Naive thymus-derived CD8-positive, alpha-beta T cell (primary cell): ENCODE measurements at regions of chr15 and their contacts with region 1.

Region 1: DNA sequence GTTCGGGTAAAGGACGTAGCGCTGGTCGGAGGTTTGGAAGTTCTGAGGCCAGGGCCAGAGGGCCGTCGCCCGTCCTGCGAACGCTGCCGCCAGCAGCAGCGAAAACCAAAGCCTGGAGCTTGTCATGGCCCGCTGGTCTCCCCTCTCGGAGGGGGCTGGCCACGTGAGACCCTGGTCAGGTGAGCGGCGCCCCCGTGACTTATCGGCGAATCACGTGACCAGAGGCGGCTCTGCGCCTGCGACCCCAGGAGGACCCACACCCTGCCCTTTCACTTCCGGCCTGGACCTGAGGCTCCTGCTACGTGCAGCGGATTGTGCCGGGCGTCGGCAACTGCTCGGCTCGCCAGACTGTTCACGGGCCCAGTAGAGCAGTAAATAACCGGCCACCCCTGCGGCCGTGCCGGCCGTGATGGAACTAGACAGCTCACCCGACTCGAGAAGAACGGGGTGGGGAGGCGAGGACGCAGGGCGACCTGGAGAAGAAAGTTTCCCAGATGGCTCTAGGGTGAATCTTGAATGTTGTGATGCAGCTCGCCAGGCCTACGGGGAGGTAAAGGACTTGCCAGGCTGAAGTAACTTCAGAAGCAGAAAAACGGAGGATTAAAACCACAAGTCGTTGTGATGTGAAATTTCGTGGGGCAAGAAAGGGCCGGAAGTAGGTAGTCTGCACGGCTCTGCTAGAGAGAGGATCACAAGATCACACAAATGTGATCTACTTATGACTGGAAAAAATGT is at the start of gene HEXA:
- DNase-seq: peak; percentile 95 to 100 (median 98)
- ATAC-seq: peak; percentile 83 to 87
- H3K4me3 Mint-ChIP-seq: peak within 1 kb of the TSS; percentile 89 to 99 (median 95)
- H3K27ac Mint-ChIP-seq: peak within 1 kb of the TSS; percentile 95 to 100 (median 98)
- H3K4me1 Mint-ChIP-seq: peaks cover 35 to 69% (median 61%) of the 10 kb centered on the region in 4 donors
- H3K27me3 Mint-ChIP-seq: peaks cover 0 to 9% (median 0%) of the 10 kb centered on the region in 5 donors
- polyA plus RNA-seq, gene HEXA: 80.0 to 113 (median 94.7) TPM

Region 2: DNA sequence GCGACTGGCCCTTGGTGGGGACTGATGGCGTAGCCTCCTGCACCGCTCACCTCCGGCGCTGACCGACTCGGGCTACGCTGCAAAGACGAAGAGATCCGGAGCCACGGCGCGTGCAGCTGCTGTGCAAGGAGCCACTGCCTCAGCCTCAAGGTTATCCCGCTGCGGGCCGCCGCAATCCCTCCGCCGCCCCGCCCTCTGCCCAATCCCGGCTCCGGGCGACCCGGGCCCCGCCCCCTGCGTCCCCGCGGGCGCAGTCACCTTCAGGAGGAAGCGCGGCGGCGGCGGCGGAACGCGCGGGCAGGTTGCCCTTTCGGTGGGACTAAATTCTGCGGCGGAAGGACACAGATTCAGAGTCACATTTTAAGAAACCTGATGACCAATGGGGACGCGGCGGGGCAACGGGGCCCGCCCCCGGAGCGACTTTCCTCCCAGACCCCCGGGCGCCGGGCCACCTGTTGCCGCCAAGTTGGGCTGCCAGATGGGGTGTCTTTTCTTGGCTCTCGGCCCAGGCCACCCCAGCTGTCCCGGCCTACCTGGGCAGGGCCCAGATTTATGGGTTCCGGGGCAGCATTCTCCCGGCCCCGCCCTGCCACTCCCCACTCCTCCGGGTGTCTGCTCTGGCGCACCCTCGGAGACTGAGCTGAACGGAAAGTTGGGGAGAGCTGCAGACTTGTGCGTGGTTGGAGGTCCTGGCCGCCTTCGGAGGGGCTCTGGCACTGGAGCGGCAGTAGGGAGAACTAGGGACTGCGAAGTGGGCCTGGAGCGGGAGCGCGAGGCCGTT is 144.8 kb before region 1 on chr15 and contains the start of gene PKM:
- POLR2A ChIA-PET with region 1: interaction called, 14 read pairs
- DNase-seq: peak; percentile 84 to 96 (median 88)
- ATAC-seq: peak; percentile 43 to 46
- H3K4me3 Mint-ChIP-seq: peak within 1 kb of the TSS; percentile 94 to 99 (median 98)
- H3K27ac Mint-ChIP-seq: peak within 1 kb of the TSS; percentile 86 to 99 (median 96)
- H3K4me1 Mint-ChIP-seq: peaks cover 25 to 56% (median 47%) of the 10 kb centered on the region in 4 donors
- H3K27me3 Mint-ChIP-seq: no peaks in the 10 kb centered on the region
- polyA plus RNA-seq, gene PKM: 305 to 330 (median 318) TPM

Region 3: GRCh38 chr15:72265031-72265430 is 111.0 kb before region 1 on chr15:
- POLR2A ChIA-PET with region 1: no interaction called
- DNase-seq: no peak
- ATAC-seq: no peak
- H3K4me3 Mint-ChIP-seq: no peak overlapping the region
- H3K27ac Mint-ChIP-seq: no peak overlapping the region
- H3K4me1 Mint-ChIP-seq: peaks cover 7 to 20% (median 10%) of the 10 kb centered on the region in 4 donors
- H3K27me3 Mint-ChIP-seq: no peaks in the 10 kb centered on the region

Region 4: DNA sequence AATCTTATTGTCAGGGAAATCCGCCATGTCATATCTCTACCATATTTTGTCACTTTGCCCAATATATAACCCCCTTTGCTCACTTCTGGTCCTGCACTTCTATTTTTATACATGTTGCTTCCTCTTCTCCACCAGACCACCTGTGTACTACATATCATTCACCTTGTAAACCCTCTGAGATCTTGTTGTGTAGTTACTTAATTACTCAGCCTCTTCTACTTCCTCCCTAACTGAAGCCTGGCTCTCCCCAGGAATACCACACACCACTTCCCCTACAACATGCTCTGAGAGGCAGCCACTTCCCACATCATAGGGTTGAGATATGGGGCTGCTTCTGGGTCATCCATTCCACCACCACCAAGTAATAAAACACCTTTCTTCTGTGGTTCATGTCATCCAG is 10.2 kb before region 1 on chr15:
- POLR2A ChIA-PET with region 1: interaction called, 15 read pairs
- DNase-seq: peak in 4 of 10 donors; percentile 15 to 49 (median 35)
- ATAC-seq: peak; percentile 72 to 95
- H3K4me3 Mint-ChIP-seq: peak overlapping the region in 6 of 10 donors; percentile 0 to 62 (median 34)
- H3K27ac Mint-ChIP-seq: peak overlapping the region in 8 of 10 donors; percentile 1 to 69 (median 24)
- H3K4me1 Mint-ChIP-seq: peaks cover 26 to 56% (median 41%) of the 10 kb centered on the region in 4 donors
- H3K27me3 Mint-ChIP-seq: no peaks in the 10 kb centered on the region

Region 5: DNA sequence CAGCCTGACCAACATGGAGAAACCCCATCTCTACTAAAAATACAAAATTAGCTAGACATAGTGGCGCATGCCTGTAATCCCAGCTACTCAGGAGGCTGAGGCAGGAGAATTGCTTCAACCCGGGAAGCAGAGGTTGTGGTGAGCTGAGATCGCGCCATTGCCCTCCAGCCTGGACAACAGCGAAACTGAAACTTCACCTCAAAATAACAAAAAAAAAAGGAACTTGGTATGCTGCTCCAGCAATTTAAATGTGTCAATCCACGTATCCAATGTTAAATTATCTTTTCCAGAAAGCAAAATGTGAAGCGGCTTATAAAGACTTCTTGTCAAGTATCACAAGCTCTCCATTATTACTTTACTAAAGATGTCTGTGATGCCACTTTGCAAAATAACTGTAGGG is 88.2 kb after region 1 on chr15:
- POLR2A ChIA-PET with region 1: interaction called, 24 read pairs
- DNase-seq: no peak
- ATAC-seq: no peak
- H3K4me3 Mint-ChIP-seq: no peak overlapping the region
- H3K27ac Mint-ChIP-seq: no peak overlapping the region
- H3K4me1 Mint-ChIP-seq: peaks cover 4 to 14% (median 10%) of the 10 kb centered on the region in 4 donors
- H3K27me3 Mint-ChIP-seq: no peaks in the 10 kb centered on the region

Region 6: GRCh38 chr15:72473614-72474465 is 97.8 kb after region 1 on chr15 and contains the start of gene ARIH1:
- POLR2A ChIA-PET with region 1: interaction called, 55 read pairs
- DNase-seq: peak; percentile 94 to 99 (median 96)
- ATAC-seq: peak; percentile 69 to 77
- H3K4me3 Mint-ChIP-seq: peak within 1 kb of the TSS; percentile 70 to 98 (median 96)
- H3K27ac Mint-ChIP-seq: peak within 1 kb of the TSS; percentile 93 to 100 (median 100)
- H3K4me1 Mint-ChIP-seq: peaks cover 26 to 53% (median 51%) of the 10 kb centered on the region in 4 donors
- H3K27me3 Mint-ChIP-seq: no peaks in the 10 kb centered on the region
- polyA plus RNA-seq, gene ARIH1: 10.3 to 19.0 (median 18.0) TPM

Region 7: GRCh38 chr15:72685925-72686794 is 310.1 kb after region 1 on chr15 and contains the starts of genes BBS4 and HIGD2B:
- POLR2A ChIA-PET with region 1: interaction called, 10 read pairs
- DNase-seq: peak; percentile 67 to 91 (median 84)
- ATAC-seq: peak; percentile 94 to 95
- H3K4me3 Mint-ChIP-seq: peak within 1 kb of the TSS; percentile 91 to 98 (median 96)
- H3K27ac Mint-ChIP-seq: peak within 1 kb of the TSS; percentile 94 to 99 (median 96)
- H3K4me1 Mint-ChIP-seq: peaks cover 10 to 27% (median 16%) of the 10 kb centered on the region in 4 donors
- H3K27me3 Mint-ChIP-seq: no peaks in the 10 kb centered on the region
- polyA plus RNA-seq, gene BBS4: 14.4 to 15.9 (median 15.4) TPM
- polyA plus RNA-seq, gene HIGD2B: not detected